Left ventricle myocardium superior (tissue), 1 donor: ENCODE measurements at regions of chr6 and their contacts with region 1.

Region 1: GRCh38 chr6:11788043-11788442 is 9.4 kb upstream of the ADTRP start:
- DNase-seq: no peak
- ATAC-seq: no peak

Region 2: DNA sequence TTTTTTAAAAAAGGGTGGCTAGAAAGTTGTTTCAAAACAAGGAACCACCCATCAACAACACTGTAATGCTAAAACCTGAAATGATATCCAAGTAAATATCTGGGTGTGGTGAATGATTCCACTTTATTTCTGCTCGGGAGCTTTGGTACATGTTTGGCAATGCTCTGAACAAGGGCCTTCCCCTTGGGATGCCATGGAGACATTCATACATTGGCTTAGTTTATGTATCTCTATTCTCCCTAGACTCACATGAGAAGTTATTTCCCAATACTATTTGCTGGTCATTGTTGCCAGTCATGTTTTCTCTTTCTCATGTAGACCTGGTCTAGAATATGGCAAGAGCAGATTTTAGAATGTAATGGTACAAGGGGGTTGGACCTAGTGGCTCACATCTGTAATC is 32.3 kb before region 1 on chr6:
- intact Hi-C with region 1: loop called (anchors 2 kb)
- DNase-seq: no peak
- ATAC-seq: no peak